ENCODE measurements at regions of chr15 and their contacts with region 1.

Region 1: DNA sequence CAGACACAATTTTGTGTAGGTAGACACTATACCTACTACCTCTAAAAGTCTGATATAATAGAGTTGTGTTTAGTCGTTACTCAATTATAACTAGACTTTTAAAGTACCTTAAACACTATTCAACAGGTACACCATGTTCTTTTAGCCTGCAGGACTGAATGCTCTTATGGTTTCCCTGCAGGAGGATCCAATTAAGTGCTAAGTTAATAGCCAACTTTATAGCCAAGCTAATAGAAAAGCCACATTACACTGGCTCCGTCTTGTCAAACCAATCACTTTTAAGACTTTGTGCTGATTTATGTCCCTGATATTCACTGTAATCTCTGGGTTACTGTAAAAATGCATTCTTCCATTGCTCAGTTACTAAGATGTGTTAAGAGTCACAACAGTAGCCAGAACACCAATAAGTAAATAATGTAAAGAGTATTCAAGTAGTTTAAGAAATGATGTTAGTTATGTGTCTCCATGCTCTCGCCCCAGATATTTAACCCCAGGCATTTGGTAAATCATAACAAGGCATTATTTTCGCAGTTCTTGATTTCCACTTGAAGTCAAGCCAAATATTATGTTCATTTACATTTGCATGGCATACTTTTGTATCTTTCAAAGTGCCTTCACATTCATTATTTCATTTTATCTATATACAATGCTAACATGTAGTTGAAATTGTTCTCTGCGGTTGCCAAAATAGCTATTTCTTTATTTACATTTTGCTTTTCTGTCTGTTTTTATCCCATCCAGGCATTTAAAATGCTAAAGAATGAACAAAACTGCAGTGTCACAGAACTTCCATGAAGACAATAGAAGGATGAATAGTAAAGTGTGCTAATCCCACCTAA is 42.7 kb upstream of the AP4E1 start:
- DNase-seq: no peak
- ATAC-seq: no peak
- H3K4me3 Mint-ChIP-seq: no peak overlapping the region
- H3K27ac Mint-ChIP-seq: no peak overlapping the region
- H3K4me1 Mint-ChIP-seq: no peaks in the 10 kb centered on the region
- H3K27me3 Mint-ChIP-seq: peaks cover 2% of the 10 kb centered on the region

Region 2: DNA sequence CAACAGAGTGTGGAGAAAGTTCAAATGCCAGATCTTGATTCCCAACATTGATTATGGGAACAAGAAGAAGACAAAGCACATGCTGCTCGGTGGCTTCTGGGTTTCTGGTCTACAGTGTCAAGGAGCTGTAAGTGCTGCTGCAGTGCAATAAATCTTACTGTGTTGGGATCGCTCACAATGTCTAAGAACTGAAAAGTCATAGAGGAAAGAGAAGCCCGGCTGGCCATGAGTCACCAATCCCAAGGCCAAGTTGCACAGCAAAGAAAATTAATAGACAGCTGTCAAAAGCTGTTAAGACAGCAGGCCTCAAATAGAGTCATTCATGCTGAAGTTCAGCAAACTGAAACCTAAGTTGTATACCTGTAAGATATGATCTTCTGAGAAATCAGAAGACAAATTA is 67.0 kb before region 1 on chr15:
- CTCF ChIA-PET with region 1: no interaction called
- POLR2A ChIA-PET with region 1: no interaction called
- intact Hi-C with region 1: no loop called
- DNase-seq: peak; percentile 11
- ATAC-seq: no peak
- H3K4me3 Mint-ChIP-seq: no peak overlapping the region
- H3K27ac Mint-ChIP-seq: no peak overlapping the region
- H3K4me1 Mint-ChIP-seq: peaks cover 5% of the 10 kb centered on the region
- H3K27me3 Mint-ChIP-seq: no peaks in the 10 kb centered on the region

Region 3: DNA sequence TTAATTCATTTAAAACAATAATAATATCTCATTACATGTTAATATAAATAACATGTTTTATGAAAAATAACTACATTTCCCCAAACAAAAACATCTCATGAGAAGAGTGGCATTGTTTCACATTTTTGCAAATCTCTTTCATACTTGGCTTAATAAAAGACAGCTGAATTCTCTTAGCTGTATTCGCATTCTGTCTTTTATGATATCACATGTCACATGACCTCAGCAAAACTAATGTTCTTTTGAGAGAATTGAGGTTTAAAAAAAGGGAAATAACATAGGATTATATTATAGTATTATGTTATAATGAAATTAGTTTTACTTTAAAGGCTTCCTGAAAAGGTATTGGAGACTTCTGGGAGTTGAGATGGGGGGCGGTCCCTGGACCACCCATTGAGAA is 51.9 kb before region 1 on chr15:
- CTCF ChIA-PET with region 1: no interaction called
- POLR2A ChIA-PET with region 1: no interaction called
- intact Hi-C with region 1: loop called in 1 of 2 experiments (anchors 5 kb)
- DNase-seq: no peak
- ATAC-seq: no peak
- H3K4me3 Mint-ChIP-seq: no peak overlapping the region
- H3K27ac Mint-ChIP-seq: no peak overlapping the region
- H3K4me1 Mint-ChIP-seq: no peaks in the 10 kb centered on the region
- H3K27me3 Mint-ChIP-seq: peaks cover 7% of the 10 kb centered on the region